Activated CD4-positive, alpha-beta memory T cell treated with anti-CD3 and anti-CD28 coated beads for 36 hours (primary cell): ENCODE measurements at regions of chr3 and their contacts with region 1.

Region 1: DNA sequence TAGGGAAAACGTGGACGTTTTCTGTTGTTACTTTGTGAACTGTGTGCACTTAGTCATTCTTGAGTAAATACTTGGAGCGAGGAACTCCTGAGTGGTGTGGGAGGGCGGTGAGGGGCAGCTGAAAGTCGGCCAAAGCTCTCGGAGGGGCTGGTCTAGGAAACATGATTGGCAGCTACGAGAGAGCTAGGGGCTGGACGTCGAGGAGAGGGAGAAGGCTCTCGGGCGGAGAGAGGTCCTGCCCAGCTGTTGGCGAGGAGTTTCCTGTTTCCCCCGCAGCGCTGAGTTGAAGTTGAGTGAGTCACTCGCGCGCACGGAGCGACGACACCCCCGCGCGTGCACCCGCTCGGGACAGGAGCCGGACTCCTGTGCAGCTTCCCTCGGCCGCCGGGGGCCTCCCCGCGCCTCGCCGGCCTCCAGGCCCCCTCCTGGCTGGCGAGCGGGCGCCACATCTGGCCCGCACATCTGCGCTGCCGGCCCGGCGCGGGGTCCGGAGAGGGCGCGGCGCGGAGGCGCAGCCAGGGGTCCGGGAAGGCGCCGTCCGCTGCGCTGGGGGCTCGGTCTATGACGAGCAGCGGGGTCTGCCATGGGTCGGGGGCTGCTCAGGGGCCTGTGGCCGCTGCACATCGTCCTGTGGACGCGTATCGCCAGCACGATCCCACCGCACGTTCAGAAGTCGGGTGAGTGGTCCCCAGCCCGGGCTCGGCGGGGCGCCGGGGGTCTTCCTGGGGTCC is at the start of gene TGFBR2:
- DNase-seq: peak; percentile 92
- H3K4me3 Mint-ChIP-seq: peak within 1 kb of the TSS; percentile 87
- H3K27ac Mint-ChIP-seq: peak within 1 kb of the TSS; percentile 96
- H3K4me1 Mint-ChIP-seq: peaks cover 53% of the 10 kb centered on the region
- H3K27me3 Mint-ChIP-seq: no peaks in the 10 kb centered on the region
- total RNA-seq, gene TGFBR2: 36.8 to 37.0 TPM

Region 2: DNA sequence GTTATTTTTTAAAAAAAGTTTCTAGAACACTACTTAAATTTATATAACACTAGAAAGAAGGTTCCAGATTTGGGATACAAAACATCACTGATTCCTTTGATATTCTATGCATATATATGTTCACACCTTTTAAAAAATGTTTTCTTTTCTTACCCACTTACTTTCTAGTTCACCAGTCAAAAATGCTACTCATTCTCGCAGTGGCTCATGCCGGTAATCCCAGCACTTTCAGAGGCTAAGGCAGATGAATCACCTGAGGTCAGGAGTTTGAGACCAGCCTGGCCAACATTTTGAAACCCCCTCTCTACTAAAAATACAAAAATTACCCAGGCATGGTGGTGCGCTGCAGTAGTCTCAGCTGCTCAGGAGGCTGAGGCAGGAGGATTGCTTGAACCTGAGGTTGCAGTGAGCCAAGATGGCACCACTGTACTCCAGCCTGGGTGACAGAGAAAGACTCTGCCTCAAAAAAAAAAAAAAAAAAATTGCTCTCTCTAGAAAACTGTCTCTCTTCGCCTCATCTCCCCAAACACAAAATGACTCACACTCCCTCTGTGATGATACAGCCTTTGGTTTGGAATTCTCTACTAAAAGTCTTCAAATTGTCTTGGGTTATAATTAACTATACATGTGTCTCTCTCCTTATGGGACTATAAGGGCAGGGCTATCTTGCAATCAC is 52.7 kb before region 1 on chr3:
- CTCF ChIA-PET with region 1: no interaction called
- POLR2A ChIA-PET with region 1: no interaction called
- intact Hi-C with region 1: loop called (anchors 5 kb)
- DNase-seq: peak; percentile 45
- H3K4me3 Mint-ChIP-seq: no peak overlapping the region
- H3K27ac Mint-ChIP-seq: no peak overlapping the region
- H3K4me1 Mint-ChIP-seq: peaks cover 17% of the 10 kb centered on the region
- H3K27me3 Mint-ChIP-seq: no peaks in the 10 kb centered on the region

Region 3: GRCh38 chr3:30623351-30623750 is 16.9 kb after region 1 on chr3:
- CTCF ChIA-PET with region 1: interaction called, 9 read pairs
- POLR2A ChIA-PET with region 1: interaction called, 182 read pairs
- intact Hi-C with region 1: loop called (anchors 1 kb)
- DNase-seq: no peak
- H3K4me3 Mint-ChIP-seq: peak overlapping the region; percentile 59
- H3K27ac Mint-ChIP-seq: peak overlapping the region; percentile 96
- H3K4me1 Mint-ChIP-seq: peaks cover 91% of the 10 kb centered on the region
- H3K27me3 Mint-ChIP-seq: no peaks in the 10 kb centered on the region

Region 4: DNA sequence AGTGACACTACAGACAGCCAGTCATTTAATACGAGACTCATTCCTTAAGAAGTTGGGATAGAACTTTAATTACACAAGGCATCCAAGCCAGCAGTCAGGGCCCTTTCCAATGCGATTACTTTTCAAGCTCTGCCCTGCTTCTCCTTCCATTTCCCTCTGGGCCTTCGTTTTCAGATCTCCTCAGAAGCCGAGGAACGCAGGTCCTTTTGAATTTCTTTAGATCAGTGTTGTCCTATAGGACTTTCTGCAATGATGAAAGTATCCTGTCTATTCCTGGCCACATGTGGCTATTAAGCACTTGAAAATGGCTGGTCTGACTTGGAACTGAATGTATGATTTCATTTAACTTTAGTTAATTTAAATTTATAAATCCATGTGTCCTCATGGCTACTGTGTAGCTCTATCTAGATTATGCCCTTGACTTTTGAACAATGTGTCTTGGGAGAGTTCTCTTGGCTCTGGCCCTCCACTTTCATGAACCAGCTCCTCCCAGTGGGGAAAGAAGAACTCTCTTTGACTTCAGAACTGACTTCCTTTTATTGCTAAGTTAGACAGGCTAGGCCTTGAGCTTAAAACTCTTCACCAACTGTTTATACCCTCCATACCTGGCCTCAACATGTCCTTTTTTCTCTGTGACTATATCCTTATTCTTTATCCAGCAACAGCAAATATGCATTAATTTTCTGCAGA is 22.6 kb after region 1 on chr3:
- CTCF ChIA-PET with region 1: interaction called, 12 read pairs
- POLR2A ChIA-PET with region 1: interaction called, 182 read pairs
- intact Hi-C with region 1: no loop called
- DNase-seq: no peak
- H3K4me3 Mint-ChIP-seq: peak overlapping the region; percentile 45
- H3K27ac Mint-ChIP-seq: peak overlapping the region; percentile 91
- H3K4me1 Mint-ChIP-seq: peaks cover 90% of the 10 kb centered on the region
- H3K27me3 Mint-ChIP-seq: no peaks in the 10 kb centered on the region

Region 5: GRCh38 chr3:30729512-30729911 is 123.0 kb after region 1 on chr3:
- CTCF ChIA-PET with region 1: no interaction called
- POLR2A ChIA-PET with region 1: no interaction called
- intact Hi-C with region 1: no loop called
- DNase-seq: no peak
- H3K4me3 Mint-ChIP-seq: no peak overlapping the region
- H3K27ac Mint-ChIP-seq: no peak overlapping the region
- H3K4me1 Mint-ChIP-seq: peaks cover 4% of the 10 kb centered on the region
- H3K27me3 Mint-ChIP-seq: no peaks in the 10 kb centered on the region

Region 6: DNA sequence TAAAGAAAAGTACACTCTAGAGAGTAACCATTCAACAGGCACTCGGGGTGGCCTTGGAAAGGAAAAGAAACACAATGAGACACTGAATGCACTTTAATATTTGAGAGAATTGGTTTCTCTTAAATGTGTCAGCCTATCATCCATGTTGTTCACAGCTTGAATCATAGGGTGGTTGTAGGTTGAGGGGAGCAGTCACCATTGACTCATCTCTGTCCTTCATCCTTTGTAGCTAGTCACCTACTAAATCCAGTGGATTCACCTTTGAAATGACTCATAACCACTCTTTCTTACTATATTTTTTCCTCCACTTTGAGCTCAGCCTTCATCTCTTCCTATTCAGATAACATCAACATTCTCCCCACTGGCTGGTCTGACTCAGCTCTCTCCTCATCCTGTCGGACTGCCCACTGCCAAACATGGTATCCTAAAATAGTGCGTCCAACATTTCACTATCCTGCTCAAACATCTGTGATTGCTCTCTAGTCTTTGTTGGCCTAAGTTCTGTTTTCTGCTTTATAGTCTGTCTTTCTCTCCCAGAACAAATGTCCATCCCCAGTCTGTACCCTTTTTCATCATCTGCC is 470.6 kb after region 1 on chr3:
- CTCF ChIA-PET with region 1: no interaction called
- POLR2A ChIA-PET with region 1: no interaction called
- intact Hi-C with region 1: no loop called
- DNase-seq: peak; percentile 73
- H3K4me3 Mint-ChIP-seq: no peak overlapping the region
- H3K27ac Mint-ChIP-seq: peak overlapping the region; percentile 1
- H3K4me1 Mint-ChIP-seq: peaks cover 18% of the 10 kb centered on the region
- H3K27me3 Mint-ChIP-seq: no peaks in the 10 kb centered on the region

Region 7: GRCh38 chr3:31361371-31362273 is 755.2 kb after region 1 on chr3:
- CTCF ChIA-PET with region 1: no interaction called
- POLR2A ChIA-PET with region 1: no interaction called
- intact Hi-C with region 1: no loop called
- DNase-seq: no peak
- H3K4me3 Mint-ChIP-seq: no peak overlapping the region
- H3K27ac Mint-ChIP-seq: no peak overlapping the region
- H3K4me1 Mint-ChIP-seq: peaks cover 39% of the 10 kb centered on the region
- H3K27me3 Mint-ChIP-seq: no peaks in the 10 kb centered on the region